CD8-positive, alpha-beta T cell (primary cell): ENCODE measurements at regions of chr16 and their contacts with region 1.

Region 1: GRCh38 chr16:50665128-50665878 is 15.8 kb downstream of the SNX20 start:
- DNase-seq: peak; percentile 70 to 92 (median 83)
- ATAC-seq: peak; percentile 73
- H3K4me3 ChIP-seq: peak overlapping the region; percentile 39 to 57
- H3K4me3 Mint-ChIP-seq: peak overlapping the region; percentile 82
- H3K27ac ChIP-seq: peak overlapping the region in 1 of 2 experiments; percentile 46
- H3K27ac Mint-ChIP-seq: no peak overlapping the region
- H3K4me1 ChIP-seq: peaks cover 21% of the 10 kb centered on the region
- H3K4me1 Mint-ChIP-seq: peaks cover 36% of the 10 kb centered on the region
- H3K27me3 ChIP-seq: no peaks in the 10 kb centered on the region
- H3K27me3 Mint-ChIP-seq: no peaks in the 10 kb centered on the region
- CTCF ChIP-seq: peak; percentile 93

Region 2: DNA sequence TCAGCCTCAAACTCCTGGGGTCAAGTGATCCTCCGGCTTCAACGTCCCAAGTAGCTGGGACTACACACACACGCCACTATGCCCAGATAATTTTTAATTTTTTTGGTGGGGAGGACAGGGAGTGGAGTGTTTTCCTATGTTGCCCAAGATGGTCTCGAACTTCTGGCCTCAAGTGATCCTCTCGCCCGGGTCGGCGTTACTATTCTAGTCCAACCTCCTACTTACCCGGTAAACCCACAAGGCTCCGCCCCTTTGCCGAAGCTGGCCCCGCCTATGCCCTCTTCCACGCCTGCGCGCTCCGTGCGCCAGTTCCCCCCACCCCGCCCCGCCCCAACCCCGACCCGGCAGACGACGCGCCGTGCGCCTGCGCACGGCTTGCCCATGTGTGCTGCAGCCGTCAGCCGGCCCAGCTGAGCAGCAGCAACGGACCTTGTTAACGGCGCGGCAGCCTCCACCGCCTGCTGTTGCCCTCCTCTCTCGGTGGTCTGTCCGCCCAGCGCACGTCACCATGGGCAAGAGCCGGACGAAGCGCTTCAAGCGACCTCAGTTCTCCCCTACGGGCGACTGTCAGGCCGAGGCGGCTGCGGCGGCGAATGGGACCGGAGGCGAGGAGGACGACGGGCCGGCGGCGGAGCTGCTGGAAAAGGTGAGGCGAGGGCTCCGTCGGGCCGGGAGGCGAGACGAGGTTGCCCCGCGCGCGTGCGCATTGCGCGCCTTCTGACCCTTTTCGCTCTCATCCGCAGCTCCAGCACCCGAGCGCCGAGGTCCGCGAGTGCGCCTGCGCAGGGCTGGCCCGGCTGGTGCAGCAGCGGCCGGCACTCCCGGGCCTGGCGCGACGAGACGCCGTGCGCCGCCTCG is 599.5 kb before region 1 on chr16 and contains the start of gene HEATR3:
- CTCF ChIA-PET with region 1: no interaction called
- POLR2A ChIA-PET with region 1: no interaction called
- intact Hi-C with region 1: loop called (anchors 5 to 10 kb)
- DNase-seq: peak; percentile 88 to 97 (median 93)
- ATAC-seq: peak; percentile 86
- H3K4me3 ChIP-seq: peak within 1 kb of the TSS; percentile 78 to 92
- H3K4me3 Mint-ChIP-seq: peak within 1 kb of the TSS; percentile 93
- H3K27ac ChIP-seq: peak within 1 kb of the TSS; percentile 73 to 79
- H3K27ac Mint-ChIP-seq: peak within 1 kb of the TSS; percentile 92
- H3K4me1 ChIP-seq: peaks cover 17% of the 10 kb centered on the region
- H3K4me1 Mint-ChIP-seq: peaks cover 42% of the 10 kb centered on the region
- H3K27me3 ChIP-seq: no peaks in the 10 kb centered on the region
- H3K27me3 Mint-ChIP-seq: no peaks in the 10 kb centered on the region
- CTCF ChIP-seq: no peak
- total RNA-seq, gene HEATR3: 9.3 to 11.4 TPM

Region 3: DNA sequence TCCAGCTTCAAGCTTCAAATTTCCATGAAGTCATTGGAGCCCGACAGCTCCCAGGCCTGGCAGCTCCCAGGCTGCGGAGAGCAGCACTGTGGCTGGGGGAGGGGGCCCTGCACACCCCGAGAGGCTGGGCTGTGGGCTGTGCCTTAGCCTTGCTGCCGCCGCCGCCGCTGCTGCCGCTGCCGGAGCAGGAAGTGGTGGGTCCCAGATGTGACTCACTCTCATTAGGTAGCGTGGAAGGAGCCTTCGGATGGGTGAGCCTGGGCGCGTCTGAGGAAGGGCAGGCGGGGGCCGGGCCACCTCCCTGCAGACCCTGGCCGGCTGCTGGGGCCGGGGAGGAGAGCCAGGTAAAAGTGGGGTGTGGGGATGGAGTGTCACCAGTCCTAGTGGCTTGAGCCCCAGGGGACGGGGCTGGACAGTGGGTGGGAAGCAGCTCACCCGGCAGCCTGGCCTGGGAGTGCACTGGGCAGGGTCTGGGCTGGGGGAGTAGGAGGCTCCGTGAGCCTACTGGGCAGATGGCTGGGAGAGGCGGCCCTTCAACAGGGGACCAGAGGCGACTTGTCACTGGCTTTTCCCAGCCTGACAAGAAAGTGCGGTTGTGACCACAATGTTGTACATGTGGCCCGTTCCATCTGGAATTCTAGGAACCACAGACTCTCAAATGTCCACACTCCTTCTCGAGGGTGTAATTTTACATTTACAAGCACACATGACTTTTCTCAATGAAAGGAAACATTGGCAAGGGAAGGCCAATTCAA is 398.8 kb before region 1 on chr16 and contains the start of gene ADCY7:
- CTCF ChIA-PET with region 1: interaction called, 7 read pairs
- POLR2A ChIA-PET with region 1: no interaction called
- intact Hi-C with region 1: loop called in 1 of 2 experiments (anchors 5 kb)
- DNase-seq: peak; percentile 58 to 90 (median 88)
- ATAC-seq: peak; percentile 83
- H3K4me3 ChIP-seq: peak within 1 kb of the TSS; percentile 91 to 94
- H3K4me3 Mint-ChIP-seq: peak within 1 kb of the TSS; percentile 97
- H3K27ac ChIP-seq: peak within 1 kb of the TSS; percentile 77 to 86
- H3K27ac Mint-ChIP-seq: peak within 1 kb of the TSS; percentile 98
- H3K4me1 ChIP-seq: peaks cover 68% of the 10 kb centered on the region
- H3K4me1 Mint-ChIP-seq: peaks cover 71% of the 10 kb centered on the region
- H3K27me3 ChIP-seq: no peaks in the 10 kb centered on the region
- H3K27me3 Mint-ChIP-seq: no peaks in the 10 kb centered on the region
- CTCF ChIP-seq: no peak
- total RNA-seq, gene ADCY7: 117 to 126 TPM

Region 4: DNA sequence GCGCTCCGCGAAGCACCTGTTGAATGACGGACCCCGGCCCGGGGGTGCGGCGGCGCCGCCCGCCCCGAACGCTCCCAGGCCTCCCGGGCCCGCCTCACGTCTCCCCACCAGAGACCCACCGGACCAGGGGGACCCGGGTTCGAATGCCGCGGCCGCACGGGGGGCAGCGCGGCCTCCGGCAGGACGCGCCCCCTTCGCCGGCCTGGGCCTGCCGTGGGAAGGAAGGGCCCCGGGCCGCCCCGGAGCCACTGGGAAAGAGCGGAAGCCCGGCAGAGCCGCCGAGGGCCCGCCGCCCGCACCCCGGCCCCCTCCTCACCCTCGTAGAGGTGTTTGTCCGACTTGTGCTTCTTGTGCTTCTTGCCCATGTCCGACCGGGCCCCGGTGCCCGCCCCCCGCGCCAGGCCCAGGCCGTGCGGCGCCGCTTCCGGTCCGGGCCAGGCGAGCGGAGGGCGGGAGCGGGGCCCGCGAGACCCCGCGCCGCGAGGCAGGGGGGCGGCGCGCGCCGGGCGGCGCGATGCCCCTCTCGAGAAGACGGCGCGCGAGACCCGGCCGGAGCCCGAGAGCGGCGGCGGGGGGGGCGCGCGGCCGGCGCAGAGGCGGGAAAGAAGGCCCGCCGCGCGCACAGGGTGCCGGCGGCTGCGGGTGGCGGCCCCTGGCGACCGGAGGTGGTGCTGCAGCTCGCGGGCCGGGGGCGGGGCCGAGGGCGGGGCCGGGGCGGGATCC is 296.7 kb before region 1 on chr16 and contains the start of gene BRD7:
- CTCF ChIA-PET with region 1: interaction called, 24 read pairs
- POLR2A ChIA-PET with region 1: no interaction called
- intact Hi-C with region 1: loop called (anchors 2 to 5 kb)
- DNase-seq: peak; percentile 60 to 88 (median 71)
- ATAC-seq: peak; percentile 94
- H3K4me3 ChIP-seq: peak within 1 kb of the TSS; percentile 54 to 60
- H3K4me3 Mint-ChIP-seq: peak within 1 kb of the TSS; percentile 85
- H3K27ac ChIP-seq: peak within 1 kb of the TSS; percentile 56 to 79
- H3K27ac Mint-ChIP-seq: peak within 1 kb of the TSS; percentile 95
- H3K4me1 ChIP-seq: peaks cover 41% of the 10 kb centered on the region
- H3K4me1 Mint-ChIP-seq: peaks cover 52% of the 10 kb centered on the region
- H3K27me3 ChIP-seq: no peaks in the 10 kb centered on the region
- H3K27me3 Mint-ChIP-seq: no peaks in the 10 kb centered on the region
- CTCF ChIP-seq: no peak
- total RNA-seq, gene BRD7: 113 to 117 TPM

Region 5: GRCh38 chr16:50635505-50636392 is 29.6 kb before region 1 on chr16:
- CTCF ChIA-PET with region 1: interaction called, 10 read pairs
- POLR2A ChIA-PET with region 1: no interaction called
- intact Hi-C with region 1: no loop called
- DNase-seq: peak in 1 of 9 experiments; percentile 33
- ATAC-seq: peak; percentile 36
- H3K4me3 ChIP-seq: no peak overlapping the region
- H3K4me3 Mint-ChIP-seq: no peak overlapping the region
- H3K27ac ChIP-seq: no peak overlapping the region
- H3K27ac Mint-ChIP-seq: no peak overlapping the region
- H3K4me1 ChIP-seq: no peaks in the 10 kb centered on the region
- H3K4me1 Mint-ChIP-seq: peaks cover 2% of the 10 kb centered on the region
- H3K27me3 ChIP-seq: no peaks in the 10 kb centered on the region
- H3K27me3 Mint-ChIP-seq: no peaks in the 10 kb centered on the region
- CTCF ChIP-seq: no peak

Region 6: GRCh38 chr16:50681021-50681885 is 15.9 kb after region 1 on chr16 and contains the start of gene SNX20:
- CTCF ChIA-PET with region 1: interaction called, 111 read pairs
- POLR2A ChIA-PET with region 1: interaction called, 46 read pairs
- intact Hi-C with region 1: loop called in 1 of 2 experiments (anchors 2 kb)
- DNase-seq: peak; percentile 43 to 87 (median 72)
- ATAC-seq: peak; percentile 92
- H3K4me3 ChIP-seq: peak within 1 kb of the TSS; percentile 65 to 88
- H3K4me3 Mint-ChIP-seq: peak within 1 kb of the TSS; percentile 92
- H3K27ac ChIP-seq: peak within 1 kb of the TSS; percentile 51 to 86
- H3K27ac Mint-ChIP-seq: peak within 1 kb of the TSS; percentile 97
- H3K4me1 ChIP-seq: peaks cover 74% of the 10 kb centered on the region
- H3K4me1 Mint-ChIP-seq: peaks cover 85% of the 10 kb centered on the region
- H3K27me3 ChIP-seq: no peaks in the 10 kb centered on the region
- H3K27me3 Mint-ChIP-seq: no peaks in the 10 kb centered on the region
- CTCF ChIP-seq: no peak
- total RNA-seq, gene SNX20: 18.6 to 20.1 TPM

Region 7: GRCh38 chr16:51107742-51108141 is 442.4 kb after region 1 on chr16:
- CTCF ChIA-PET with region 1: no interaction called
- POLR2A ChIA-PET with region 1: no interaction called
- intact Hi-C with region 1: no loop called
- DNase-seq: no peak
- ATAC-seq: no peak
- H3K4me3 ChIP-seq: no peak overlapping the region
- H3K4me3 Mint-ChIP-seq: no peak overlapping the region
- H3K27ac ChIP-seq: no peak overlapping the region
- H3K27ac Mint-ChIP-seq: no peak overlapping the region
- H3K4me1 ChIP-seq: no peaks in the 10 kb centered on the region
- H3K4me1 Mint-ChIP-seq: no peaks in the 10 kb centered on the region
- H3K27me3 ChIP-seq: no peaks in the 10 kb centered on the region
- H3K27me3 Mint-ChIP-seq: peaks cover 16% of the 10 kb centered on the region
- CTCF ChIP-seq: no peak